B cell (primary cell): ENCODE measurements at regions of chrX and their contacts with region 1.

Region 1: GRCh38 chrX:150587585-150588503 is 19.4 kb downstream of the MTM1 start:
- DNase-seq: peak; percentile 52
- ATAC-seq: no peak
- H3K4me3 ChIP-seq: no peak overlapping the region
- H3K4me3 Mint-ChIP-seq: no peak overlapping the region
- H3K27ac ChIP-seq: no peak overlapping the region
- H3K27ac Mint-ChIP-seq: no peak overlapping the region
- H3K4me1 ChIP-seq: no peaks in the 10 kb centered on the region
- H3K4me1 Mint-ChIP-seq: peaks cover 15% of the 10 kb centered on the region
- H3K27me3 ChIP-seq: no peaks in the 10 kb centered on the region
- H3K27me3 Mint-ChIP-seq: no peaks in the 10 kb centered on the region
- CTCF ChIP-seq: peak; percentile 74

Region 2: GRCh38 chrX:149962859-149963757 is 624.7 kb before region 1 on chrX:
- CTCF ChIA-PET with region 1: no interaction called
- POLR2A ChIA-PET with region 1: no interaction called
- intact Hi-C with region 1: loop called (anchors 2 kb)
- DNase-seq: peak; percentile 29
- ATAC-seq: no peak
- H3K4me3 ChIP-seq: no peak overlapping the region
- H3K4me3 Mint-ChIP-seq: no peak overlapping the region
- H3K27ac ChIP-seq: no peak overlapping the region
- H3K27ac Mint-ChIP-seq: no peak overlapping the region
- H3K4me1 ChIP-seq: no peaks in the 10 kb centered on the region
- H3K4me1 Mint-ChIP-seq: no peaks in the 10 kb centered on the region
- H3K27me3 ChIP-seq: no peaks in the 10 kb centered on the region
- H3K27me3 Mint-ChIP-seq: no peaks in the 10 kb centered on the region
- CTCF ChIP-seq: peak; percentile 49

Region 3: DNA sequence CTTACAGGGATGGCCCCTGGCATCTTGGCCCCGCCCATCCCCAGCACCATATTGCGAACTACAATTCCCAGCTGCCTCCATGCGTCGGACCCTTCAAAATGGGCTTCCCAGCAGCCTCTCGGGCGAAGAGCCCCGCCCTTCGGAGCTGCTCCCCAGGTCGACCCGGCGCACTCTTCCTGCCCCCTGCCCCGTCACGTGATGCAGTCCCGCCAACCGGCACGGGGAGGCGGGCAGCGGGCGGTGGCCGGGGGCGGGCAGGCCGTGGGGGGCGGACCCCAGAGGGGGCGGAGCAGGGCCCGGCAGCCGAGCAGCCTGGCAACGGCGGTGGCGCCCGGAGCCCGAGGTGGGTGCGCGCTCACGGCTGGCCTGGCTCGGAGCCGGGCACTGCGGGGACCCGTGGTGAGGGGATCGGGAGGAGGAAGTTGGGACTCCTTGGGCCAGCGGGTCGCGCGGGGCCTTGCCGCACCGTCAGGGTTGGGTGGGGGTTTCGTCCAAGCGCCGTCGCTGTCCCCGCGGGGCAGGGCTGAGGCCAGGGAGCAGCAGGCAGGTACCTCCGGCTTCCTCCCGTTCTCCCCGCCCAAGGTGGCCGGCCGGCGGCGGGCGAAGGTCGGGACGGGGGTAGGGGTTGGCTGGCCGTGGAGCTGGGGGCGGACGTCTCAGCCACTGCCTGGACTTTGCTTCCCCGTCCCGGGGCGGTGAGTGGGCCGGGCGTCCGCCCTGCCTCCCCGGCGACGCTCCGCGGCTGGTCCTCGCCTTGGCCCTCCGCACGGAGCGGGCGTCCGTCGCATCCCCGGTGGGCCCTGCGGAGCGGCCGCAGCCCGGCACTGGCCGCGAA is 19.3 kb before region 1 on chrX and contains the start of gene MTM1:
- CTCF ChIA-PET with region 1: interaction called, 17 read pairs
- POLR2A ChIA-PET with region 1: no interaction called
- intact Hi-C with region 1: loop called (anchors 2 kb)
- DNase-seq: peak; percentile 93
- ATAC-seq: peak; percentile 90
- H3K4me3 ChIP-seq: peak within 1 kb of the TSS; percentile 35 to 77 (median 75)
- H3K4me3 Mint-ChIP-seq: peak within 1 kb of the TSS; percentile 93
- H3K27ac ChIP-seq: peak within 1 kb of the TSS; percentile 80 to 84
- H3K27ac Mint-ChIP-seq: peak within 1 kb of the TSS; percentile 95
- H3K4me1 ChIP-seq: peaks cover 40 to 44% of the 10 kb centered on the region in 2 donors
- H3K4me1 Mint-ChIP-seq: peaks cover 45% of the 10 kb centered on the region
- H3K27me3 ChIP-seq: no peaks in the 10 kb centered on the region
- H3K27me3 Mint-ChIP-seq: no peaks in the 10 kb centered on the region
- CTCF ChIP-seq: no peak
- total RNA-seq, gene MTM1: 24.2 and 29.8 TPM in 2 replicates

Region 4: GRCh38 chrX:150575416-150575808 is 12.4 kb before region 1 on chrX:
- CTCF ChIA-PET with region 1: interaction called, 17 read pairs
- POLR2A ChIA-PET with region 1: no interaction called
- intact Hi-C with region 1: loop called (anchors 2 kb)
- DNase-seq: no peak
- ATAC-seq: no peak
- H3K4me3 ChIP-seq: peak overlapping the region in 2 of 5 experiments; percentile 12 to 22
- H3K4me3 Mint-ChIP-seq: peak overlapping the region; percentile 74
- H3K27ac ChIP-seq: peak overlapping the region in 1 of 2 donors; percentile 12
- H3K27ac Mint-ChIP-seq: peak overlapping the region; percentile 82
- H3K4me1 ChIP-seq: peaks cover 59 to 68% of the 10 kb centered on the region in 2 donors
- H3K4me1 Mint-ChIP-seq: peaks cover 80% of the 10 kb centered on the region
- H3K27me3 ChIP-seq: no peaks in the 10 kb centered on the region
- H3K27me3 Mint-ChIP-seq: no peaks in the 10 kb centered on the region
- CTCF ChIP-seq: no peak

Region 5: GRCh38 chrX:151789179-151789800 is 1201.4 kb after region 1 on chrX:
- CTCF ChIA-PET with region 1: no interaction called
- POLR2A ChIA-PET with region 1: no interaction called
- intact Hi-C with region 1: no loop called
- DNase-seq: no peak
- ATAC-seq: no peak
- H3K4me3 ChIP-seq: no peak overlapping the region
- H3K4me3 Mint-ChIP-seq: no peak overlapping the region
- H3K27ac ChIP-seq: no peak overlapping the region
- H3K27ac Mint-ChIP-seq: no peak overlapping the region
- H3K4me1 ChIP-seq: no peaks in the 10 kb centered on the region
- H3K4me1 Mint-ChIP-seq: no peaks in the 10 kb centered on the region
- H3K27me3 ChIP-seq: no peaks in the 10 kb centered on the region
- H3K27me3 Mint-ChIP-seq: no peaks in the 10 kb centered on the region
- CTCF ChIP-seq: no peak